ENCODE measurements at regions of chr14 and their contacts with region 1.

Region 1: DNA sequence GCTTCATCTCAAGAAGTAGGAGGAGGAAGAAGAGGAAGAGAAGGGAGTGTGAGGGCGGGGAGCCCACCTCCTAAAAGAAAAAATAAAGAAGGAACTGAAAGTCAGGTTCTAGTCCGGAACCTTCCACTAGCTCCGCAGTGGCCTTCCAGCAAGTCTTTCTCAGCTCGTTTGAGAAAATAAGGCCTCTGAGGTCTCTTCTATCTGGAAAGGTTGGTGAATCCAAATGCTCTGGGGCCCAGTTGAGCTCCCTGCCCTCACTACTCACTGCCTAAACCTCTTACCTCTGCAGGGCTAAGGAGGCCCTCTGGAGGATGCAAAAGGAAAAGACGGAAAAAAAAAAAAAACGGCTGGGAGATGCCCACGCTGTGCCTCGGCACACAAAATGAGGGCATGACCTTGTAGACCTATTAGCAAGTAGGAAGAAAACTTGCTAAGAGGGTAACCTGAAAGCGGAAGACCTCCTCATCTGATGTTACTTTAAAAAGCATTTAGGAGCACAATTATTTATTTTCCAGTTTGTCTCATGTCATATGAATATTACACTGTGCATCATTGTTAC is 35.9 kb downstream of the FBLN5 start:
- DNase-seq: peak; percentile 55
- ATAC-seq: peak; percentile 83
- H3K4me3 Mint-ChIP-seq: no peak overlapping the region
- H3K27ac Mint-ChIP-seq: no peak overlapping the region
- H3K4me1 Mint-ChIP-seq: peaks cover 12% of the 10 kb centered on the region
- H3K27me3 Mint-ChIP-seq: peaks cover 3% of the 10 kb centered on the region

Region 2: DNA sequence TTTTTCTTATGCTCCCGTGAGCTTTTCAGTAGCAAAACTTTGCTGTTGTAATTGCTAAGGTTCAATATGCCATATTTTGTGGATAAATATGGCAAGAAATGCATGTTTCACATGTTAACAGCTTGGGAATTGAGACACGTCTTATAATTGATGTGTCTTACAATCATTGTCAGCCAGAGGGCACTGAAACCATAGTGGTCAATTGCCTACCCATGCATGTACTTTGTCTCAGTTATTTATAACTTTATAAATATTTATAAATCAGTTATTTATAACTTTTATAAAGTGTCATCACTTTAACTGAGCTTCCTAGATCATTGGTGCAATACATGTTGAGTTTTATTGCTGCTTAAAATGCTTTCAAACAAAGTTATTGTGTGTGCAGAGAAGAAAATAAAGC is 261.6 kb before region 1 on chr14:
- CTCF ChIA-PET with region 1: interaction called, 22 read pairs
- DNase-seq: peak; percentile 43
- ATAC-seq: no peak
- H3K4me3 Mint-ChIP-seq: no peak overlapping the region
- H3K27ac Mint-ChIP-seq: no peak overlapping the region
- H3K4me1 Mint-ChIP-seq: peaks cover 7% of the 10 kb centered on the region
- H3K27me3 Mint-ChIP-seq: no peaks in the 10 kb centered on the region

Region 3: GRCh38 chr14:91714805-91715204 is 196.7 kb before region 1 on chr14:
- CTCF ChIA-PET with region 1: interaction called, 12 read pairs
- DNase-seq: peak; percentile 81
- ATAC-seq: peak; percentile 93
- H3K4me3 Mint-ChIP-seq: no peak overlapping the region
- H3K27ac Mint-ChIP-seq: peak overlapping the region; percentile 87
- H3K4me1 Mint-ChIP-seq: peaks cover 6% of the 10 kb centered on the region
- H3K27me3 Mint-ChIP-seq: no peaks in the 10 kb centered on the region

Region 4: DNA sequence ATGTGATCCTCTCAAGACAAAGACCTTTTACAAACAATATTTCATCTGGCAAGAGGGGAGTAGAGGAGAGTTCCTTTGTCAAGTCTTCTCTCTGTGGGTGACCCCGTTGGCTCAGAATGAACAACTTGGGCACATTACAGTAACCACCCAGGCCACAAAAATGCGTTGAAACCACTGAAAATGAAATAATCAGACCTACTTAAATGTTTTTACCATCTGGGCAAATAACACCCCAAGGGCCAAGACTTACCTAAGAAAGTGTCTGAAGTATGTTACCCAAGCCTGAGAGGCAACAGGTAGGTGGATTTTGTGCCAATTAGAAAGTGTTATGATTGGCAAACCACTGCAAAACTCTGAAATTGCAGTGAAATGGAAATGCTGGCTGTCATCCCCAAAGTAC is 45.5 kb before region 1 on chr14:
- CTCF ChIA-PET with region 1: interaction called, 13 read pairs
- DNase-seq: peak; percentile 76
- ATAC-seq: no peak
- H3K4me3 Mint-ChIP-seq: peak overlapping the region; percentile 93
- H3K27ac Mint-ChIP-seq: peak overlapping the region; percentile 99
- H3K4me1 Mint-ChIP-seq: peaks cover 90% of the 10 kb centered on the region
- H3K27me3 Mint-ChIP-seq: no peaks in the 10 kb centered on the region

Region 5: DNA sequence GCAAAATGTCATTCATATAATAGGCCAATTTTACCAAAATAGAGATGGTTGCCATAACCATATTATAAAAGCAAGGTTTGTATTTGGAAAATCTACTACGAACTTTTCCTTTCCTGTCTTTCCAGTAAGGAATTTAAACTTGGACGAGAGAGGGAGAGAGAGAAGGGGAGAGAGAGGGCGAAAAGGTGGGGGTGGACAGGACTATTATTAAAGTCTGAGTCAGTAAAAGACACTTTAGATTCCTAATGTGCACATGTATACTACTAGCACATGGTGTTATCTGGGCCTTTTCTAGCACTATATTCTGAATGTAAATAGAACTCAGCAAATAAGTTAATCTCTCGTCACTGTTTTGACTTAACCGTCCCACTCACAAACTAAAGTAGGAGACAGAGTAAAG is 66.3 kb after region 1 on chr14:
- CTCF ChIA-PET with region 1: no interaction called
- DNase-seq: no peak
- ATAC-seq: no peak
- H3K4me3 Mint-ChIP-seq: no peak overlapping the region
- H3K27ac Mint-ChIP-seq: no peak overlapping the region
- H3K4me1 Mint-ChIP-seq: peaks cover 23% of the 10 kb centered on the region
- H3K27me3 Mint-ChIP-seq: no peaks in the 10 kb centered on the region

Region 6: DNA sequence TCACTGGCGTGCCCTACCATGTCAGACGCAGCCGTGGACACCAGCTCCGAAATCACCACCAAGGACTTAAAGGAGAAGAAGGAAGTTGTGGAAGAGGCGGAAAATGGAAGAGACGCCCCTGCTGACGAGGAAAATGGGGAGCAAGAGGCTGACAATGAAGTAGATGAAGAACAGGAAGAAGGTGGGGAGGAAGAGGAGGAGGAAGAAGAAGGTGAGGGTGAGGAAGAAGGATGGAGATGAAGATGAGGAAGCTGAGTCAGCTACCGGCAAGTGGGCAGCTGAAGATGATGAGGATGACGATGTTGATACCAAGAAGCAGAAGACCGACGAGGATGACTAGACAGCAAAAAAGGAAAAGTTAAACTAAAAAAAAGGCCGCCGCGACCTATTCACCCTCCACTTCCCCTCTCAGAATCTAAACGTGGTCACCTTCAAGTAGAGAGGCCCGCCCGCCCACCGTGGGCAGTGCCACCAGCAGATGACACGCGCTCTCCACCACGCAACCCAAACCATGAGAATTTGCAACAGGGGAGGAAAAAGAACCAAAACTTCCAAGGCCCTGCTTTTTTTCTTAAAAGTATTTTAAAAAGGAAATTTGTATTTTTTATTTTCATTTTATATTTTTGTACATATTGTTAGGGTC is 115.1 kb after region 1 on chr14:
- CTCF ChIA-PET with region 1: no interaction called
- DNase-seq: no peak
- ATAC-seq: no peak
- H3K4me3 Mint-ChIP-seq: no peak overlapping the region
- H3K27ac Mint-ChIP-seq: no peak overlapping the region
- H3K4me1 Mint-ChIP-seq: peaks cover 15% of the 10 kb centered on the region
- H3K27me3 Mint-ChIP-seq: no peaks in the 10 kb centered on the region

Measured in activated CD8-positive, alpha-beta memory T cell treated with anti-CD3 and anti-CD28 coated beads, Interleukin-2, amount 10 ng/mL, durations not matched to agents 7 days and 5 days (primary cell).